ENCODE measurements at regions of chr17 and their contacts with region 1.

Region 1: GRCh38 chr17:77542551-77543490 is 402.1 kb downstream of the SEC14L1 start:
- DNase-seq: peak; percentile 94
- H3K4me3 ChIP-seq: peak overlapping the region in 1 of 2 experiments; percentile 8; a peak in 1 of 4 replicates
- H3K27ac ChIP-seq: 0 out of 4 replicates have a peak overlapping the region, but pooled peaks of 1 of the 2 experiments have one; percentile 18
- H3K4me1 ChIP-seq: peaks cover 4 to 23% of the 10 kb centered on the region in 2 experiments; a peak in 2 of 4 replicates
- H3K27me3 ChIP-seq: peaks cover 52% of the 10 kb centered on the region
- CTCF ChIP-seq: peak; percentile 99
- EP300 ChIP-seq: peak in 1 of 2 experiments; percentile 69; a peak in 1 of 4 replicates
- RAD21 ChIP-seq: peak; percentile 100

Region 2: DNA sequence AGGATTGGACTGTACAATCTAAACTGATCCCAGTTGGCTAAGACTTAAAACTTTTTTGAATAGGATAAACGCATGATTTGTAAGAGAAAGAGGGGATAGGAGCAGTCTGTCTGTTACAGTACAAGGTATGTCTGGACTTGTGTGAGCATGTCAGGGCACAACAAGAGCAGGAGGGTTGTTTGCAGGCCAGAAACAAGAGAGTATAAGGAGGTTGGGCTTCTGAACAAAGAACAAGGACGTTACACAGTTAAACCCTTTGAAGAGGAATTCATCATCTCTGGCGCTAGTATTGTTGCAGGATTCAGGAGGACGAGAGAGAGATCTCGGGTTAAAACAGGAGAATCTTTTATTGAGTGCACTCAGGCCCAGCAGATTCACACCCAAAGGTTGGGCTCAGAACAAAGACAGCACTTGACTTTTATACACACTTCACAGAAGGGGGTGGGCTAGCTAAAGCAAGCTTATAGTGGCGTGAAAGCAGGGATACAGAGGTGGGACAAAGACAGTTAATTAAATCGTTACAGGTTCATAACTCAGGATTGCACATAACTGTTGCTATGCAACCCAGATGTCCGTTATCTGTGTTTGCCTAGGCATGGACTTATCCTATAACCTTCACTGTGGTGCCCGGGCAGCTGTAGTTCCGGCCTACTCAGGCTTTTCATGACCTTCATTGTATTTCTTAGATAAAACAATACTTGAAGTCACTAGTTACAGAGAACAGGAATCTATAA is 367.7 kb before region 1 on chr17:
- CTCF ChIA-PET with region 1: no interaction called
- POLR2A ChIA-PET with region 1: no interaction called
- DNase-seq: no peak
- H3K4me3 ChIP-seq: peak overlapping the region in 1 of 2 experiments; percentile 6; a peak in 1 of 4 replicates
- H3K27ac ChIP-seq: no peak overlapping the region
- H3K4me1 ChIP-seq: no peaks in the 10 kb centered on the region
- H3K27me3 ChIP-seq: no peaks in the 10 kb centered on the region
- CTCF ChIP-seq: no peak
- EP300 ChIP-seq: no peak
- RAD21 ChIP-seq: no peak

Region 3: DNA sequence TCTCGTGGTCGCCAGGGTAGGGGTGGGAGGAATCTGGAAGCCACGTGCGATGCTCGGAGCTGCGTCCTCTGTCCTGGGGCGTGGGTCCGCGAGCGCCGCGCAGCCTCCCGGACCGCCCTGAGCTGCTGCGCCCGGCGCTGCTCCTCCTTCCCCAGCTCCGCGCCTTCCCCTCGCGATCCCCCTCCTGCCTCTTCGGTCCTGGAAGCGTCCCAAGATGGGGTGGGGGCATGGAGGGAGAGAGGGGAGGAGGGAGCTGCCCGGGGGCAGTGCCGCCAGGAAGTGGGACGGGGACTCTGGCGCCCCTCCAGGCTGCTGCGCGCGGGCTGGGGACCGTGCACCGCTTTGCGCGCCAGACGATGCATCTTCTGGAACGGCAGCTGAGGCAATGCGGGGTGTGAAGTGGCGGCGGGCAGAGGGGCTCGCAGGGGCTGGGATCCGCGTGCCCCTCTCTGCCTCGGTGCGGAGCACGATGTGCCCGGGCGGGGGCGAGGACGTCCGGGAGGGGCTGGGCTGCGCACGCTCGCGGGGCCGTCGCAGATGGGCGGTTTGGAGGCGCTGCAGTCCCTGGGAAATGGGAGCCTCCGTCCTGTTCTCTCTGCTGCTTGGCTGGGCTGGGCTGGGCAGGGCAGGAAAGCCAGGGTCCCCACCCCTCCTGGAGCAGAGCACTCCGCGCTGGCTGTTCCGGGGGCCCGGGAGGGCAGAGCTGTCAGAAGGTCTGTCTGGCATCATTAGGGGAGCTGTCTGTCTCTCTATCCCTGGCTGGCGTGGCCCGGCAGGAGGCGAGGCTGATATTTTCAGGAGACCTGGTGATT is 14.1 kb before region 1 on chr17:
- CTCF ChIA-PET with region 1: interaction called, 47 read pairs
- POLR2A ChIA-PET with region 1: interaction called, 3 read pairs
- DNase-seq: peak; percentile 95
- H3K4me3 ChIP-seq: peak overlapping the region; percentile 43 to 44; a peak in 3 of 4 replicates
- H3K27ac ChIP-seq: no peak overlapping the region
- H3K4me1 ChIP-seq: peaks cover 0 to 13% of the 10 kb centered on the region in 2 experiments; a peak in 1 of 4 replicates
- H3K27me3 ChIP-seq: peaks cover 38% of the 10 kb centered on the region; the same call in 1 of the 2 replicates
- CTCF ChIP-seq: no peak
- EP300 ChIP-seq: no peak
- RAD21 ChIP-seq: no peak

Region 4: DNA sequence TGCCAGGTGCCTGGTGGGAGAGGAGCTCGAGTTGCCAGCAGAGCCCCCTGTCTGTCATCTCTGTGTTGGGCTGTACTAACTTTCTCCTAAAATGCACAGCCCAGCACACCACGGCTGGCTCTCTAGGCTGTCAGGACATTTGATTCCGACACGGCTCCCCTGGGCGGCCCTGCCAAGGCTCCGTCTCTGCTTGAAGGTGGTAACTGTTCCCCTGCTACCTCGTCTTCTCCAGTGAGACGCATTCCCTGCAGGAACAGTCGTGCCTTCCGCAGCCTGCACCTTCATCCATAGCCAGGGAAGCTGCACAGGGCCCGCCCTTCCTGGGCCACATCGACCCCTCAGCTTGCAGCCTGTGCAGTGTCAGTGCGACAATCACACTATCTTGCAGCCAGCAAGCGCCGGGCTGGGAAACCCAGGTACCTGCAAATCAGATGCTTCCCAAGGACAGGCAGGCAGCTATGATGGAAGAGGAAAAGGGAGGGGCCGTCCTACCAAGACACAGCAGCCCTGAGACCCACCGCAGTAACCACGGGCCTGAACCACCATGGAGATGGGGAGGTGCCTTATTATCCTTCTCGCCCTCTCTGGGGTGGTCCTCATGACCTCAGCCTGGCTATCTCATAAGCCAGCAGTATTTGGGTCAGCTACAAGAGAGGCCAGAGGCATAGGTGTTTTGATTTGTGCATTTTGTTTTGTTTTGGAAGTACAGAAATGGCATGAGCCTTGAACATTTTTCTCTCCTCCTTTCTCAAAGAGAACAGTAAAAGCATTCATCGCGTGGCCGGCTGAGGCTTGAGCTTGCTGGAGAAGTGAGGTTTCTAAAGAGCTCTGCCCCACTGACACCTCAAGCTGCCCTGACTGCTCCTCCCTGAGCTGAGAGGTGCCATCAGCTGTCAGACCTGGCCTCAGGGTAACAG is 53.9 kb after region 1 on chr17:
- CTCF ChIA-PET with region 1: interaction called, 15 read pairs
- POLR2A ChIA-PET with region 1: no interaction called
- DNase-seq: no peak
- H3K4me3 ChIP-seq: no peak overlapping the region
- H3K27ac ChIP-seq: no peak overlapping the region
- H3K4me1 ChIP-seq: peaks cover 0 to 20% of the 10 kb centered on the region in 2 experiments; a peak in 2 of 4 replicates
- H3K27me3 ChIP-seq: peaks cover 63% of the 10 kb centered on the region
- CTCF ChIP-seq: no peak
- EP300 ChIP-seq: no peak
- RAD21 ChIP-seq: no peak

Region 5: GRCh38 chr17:77734341-77735080 is 191.7 kb after region 1 on chr17:
- CTCF ChIA-PET with region 1: interaction called, 26 read pairs
- POLR2A ChIA-PET with region 1: interaction called, 9 read pairs
- DNase-seq: peak; percentile 99
- H3K4me3 ChIP-seq: peak overlapping the region in 1 of 2 experiments; percentile 15; a peak in 2 of 4 replicates
- H3K27ac ChIP-seq: peak overlapping the region in 1 of 2 experiments; percentile 93; a peak in 2 of 4 replicates
- H3K4me1 ChIP-seq: peaks cover 12 to 35% of the 10 kb centered on the region in 2 experiments; a peak in 3 of 4 replicates
- H3K27me3 ChIP-seq: no peaks in the 10 kb centered on the region
- CTCF ChIP-seq: no peak
- EP300 ChIP-seq: peak in 1 of 2 experiments; percentile 76; a peak in 2 of 4 replicates
- RAD21 ChIP-seq: peak; percentile 59

Region 6: DNA sequence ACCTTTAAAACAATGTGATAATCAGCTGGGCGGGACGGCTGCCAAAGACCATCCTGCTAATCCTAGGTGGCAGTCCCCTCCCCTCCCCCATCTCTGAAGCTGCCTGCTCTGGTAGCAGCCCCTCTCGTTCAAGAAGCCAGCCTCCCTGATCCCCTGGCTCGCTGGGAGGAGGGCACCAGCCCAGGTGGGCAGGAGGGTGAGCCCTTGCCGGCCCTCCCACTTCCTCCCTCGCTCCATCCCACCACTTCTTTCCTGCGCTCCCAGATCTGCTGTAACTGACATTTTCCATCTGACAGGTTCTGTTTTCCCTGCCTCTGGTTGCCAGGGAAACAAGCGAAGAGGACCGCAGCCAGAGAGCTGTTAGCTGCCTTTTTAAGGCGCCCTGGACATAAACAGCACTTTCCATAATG is 260.0 kb after region 1 on chr17:
- CTCF ChIA-PET with region 1: interaction called, 11 read pairs
- POLR2A ChIA-PET with region 1: no interaction called
- DNase-seq: peak; percentile 93
- H3K4me3 ChIP-seq: no peak overlapping the region; a peak in 1 of 4 replicates
- H3K27ac ChIP-seq: peak overlapping the region in 1 of 2 experiments; percentile 95; a peak in 2 of 4 replicates
- H3K4me1 ChIP-seq: peaks cover 0 to 32% of the 10 kb centered on the region in 2 experiments; a peak in 2 of 4 replicates
- H3K27me3 ChIP-seq: no peaks in the 10 kb centered on the region; the same call in 1 of the 2 replicates
- CTCF ChIP-seq: no peak
- EP300 ChIP-seq: peak in 1 of 2 experiments; percentile 61; a peak in 2 of 4 replicates
- RAD21 ChIP-seq: peak; percentile 52

Region 7: GRCh38 chr17:77875881-77876509 is 333.2 kb after region 1 on chr17:
- CTCF ChIA-PET with region 1: interaction called, 29 read pairs
- POLR2A ChIA-PET with region 1: no interaction called
- DNase-seq: no peak
- H3K4me3 ChIP-seq: no peak overlapping the region
- H3K27ac ChIP-seq: no peak overlapping the region
- H3K4me1 ChIP-seq: peaks cover 3 to 62% of the 10 kb centered on the region in 2 experiments; a peak in 2 of 4 replicates
- H3K27me3 ChIP-seq: no peaks in the 10 kb centered on the region
- CTCF ChIP-seq: no peak
- EP300 ChIP-seq: no peak
- RAD21 ChIP-seq: no peak

Region 8: DNA sequence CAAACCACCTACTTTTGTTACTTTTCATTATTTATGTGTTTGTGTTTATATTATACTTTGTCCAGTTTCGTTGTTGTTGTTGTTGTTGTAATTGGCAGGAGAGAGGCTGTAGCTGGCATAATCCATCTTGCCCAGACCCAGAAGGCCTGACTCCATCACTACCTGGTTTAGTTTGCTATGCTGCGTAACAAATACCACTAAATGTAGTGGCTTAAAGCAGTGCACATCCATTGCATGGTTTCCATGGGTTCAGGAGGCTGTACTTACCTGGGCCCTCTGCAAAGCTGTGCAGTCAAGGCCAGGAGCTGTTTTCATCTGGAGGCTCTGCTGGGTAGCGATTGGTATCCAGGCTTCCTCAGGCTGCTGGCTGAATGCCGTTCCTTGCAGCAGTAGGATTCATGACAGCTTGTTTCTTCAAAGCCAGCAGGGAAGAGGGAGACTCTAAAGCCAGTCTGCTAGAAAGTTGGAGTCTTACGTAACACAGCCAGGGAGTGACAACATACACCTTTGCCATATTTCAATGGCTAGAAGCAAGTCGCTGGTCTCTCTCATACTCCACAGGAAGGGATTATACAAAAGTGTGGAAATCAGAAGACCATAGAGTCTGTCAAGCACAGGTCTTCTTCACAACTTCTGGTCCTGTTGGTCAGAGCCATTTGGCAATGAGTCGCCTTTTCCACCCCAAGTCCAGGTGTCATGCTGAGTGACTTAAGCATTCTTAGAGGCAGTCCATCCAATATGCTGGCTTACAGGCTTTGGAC is 456.8 kb after region 1 on chr17:
- CTCF ChIA-PET with region 1: interaction called, 13 read pairs
- POLR2A ChIA-PET with region 1: no interaction called
- DNase-seq: no peak
- H3K4me3 ChIP-seq: no peak overlapping the region
- H3K27ac ChIP-seq: peak overlapping the region; percentile 61 to 69; a peak in 3 of 4 replicates
- H3K4me1 ChIP-seq: peaks cover 21 to 44% of the 10 kb centered on the region in 2 experiments
- H3K27me3 ChIP-seq: no peaks in the 10 kb centered on the region
- CTCF ChIP-seq: no peak
- EP300 ChIP-seq: no peak
- RAD21 ChIP-seq: no peak